ENCODE measurements at regions of chr16 and their contacts with region 1.

Region 1: DNA sequence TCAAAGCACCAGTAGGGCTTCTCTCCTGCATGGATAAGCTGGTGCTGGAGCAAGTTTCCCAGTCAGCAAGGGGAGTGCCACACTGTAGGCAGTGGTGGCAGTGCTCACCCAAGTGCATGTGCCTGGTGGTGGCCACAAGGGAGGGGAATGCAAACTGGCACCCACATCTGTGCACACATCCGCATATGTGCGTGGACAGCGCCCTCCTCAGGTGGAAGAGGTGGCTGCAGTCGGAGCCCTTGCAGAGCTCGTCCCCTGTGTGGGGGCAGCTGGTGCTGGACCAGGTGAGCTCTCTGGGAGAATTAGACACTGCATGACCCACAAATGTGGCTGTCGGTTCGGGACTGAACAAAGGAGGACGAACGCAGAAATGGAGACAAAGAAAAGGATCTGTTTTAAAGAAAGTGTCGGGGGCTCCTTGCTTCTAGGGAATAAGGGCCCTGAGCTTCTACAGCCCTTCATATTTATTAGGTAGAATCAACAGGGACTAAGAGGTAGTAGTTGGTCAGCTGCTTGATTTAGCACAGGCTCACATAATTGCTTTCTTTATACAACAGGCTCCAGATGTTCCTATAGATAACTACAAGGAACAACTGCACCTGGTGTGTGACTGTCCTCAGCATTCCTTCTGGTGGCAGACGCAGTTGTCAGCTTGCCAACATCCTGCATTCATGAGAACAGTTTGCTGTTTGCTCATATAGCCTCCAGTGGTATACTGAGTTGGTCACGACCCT is 5.3 kb upstream of the ZNF689 start:
- H3K4me3 ChIP-seq: no peak overlapping the region
- H3K27ac ChIP-seq: no peak overlapping the region
- H3K4me1 ChIP-seq: no peaks in the 10 kb centered on the region
- CTCF ChIP-seq: peak; percentile 95

Region 2: GRCh38 chr16:30458561-30459394 is 156.7 kb before region 1 on chr16:
- CTCF ChIA-PET with region 1: interaction called, 15 read pairs
- POLR2A ChIA-PET with region 1: no interaction called
- H3K4me3 ChIP-seq: no peak overlapping the region
- H3K27ac ChIP-seq: no peak overlapping the region
- H3K4me1 ChIP-seq: no peaks in the 10 kb centered on the region
- CTCF ChIP-seq: no peak

Region 3: DNA sequence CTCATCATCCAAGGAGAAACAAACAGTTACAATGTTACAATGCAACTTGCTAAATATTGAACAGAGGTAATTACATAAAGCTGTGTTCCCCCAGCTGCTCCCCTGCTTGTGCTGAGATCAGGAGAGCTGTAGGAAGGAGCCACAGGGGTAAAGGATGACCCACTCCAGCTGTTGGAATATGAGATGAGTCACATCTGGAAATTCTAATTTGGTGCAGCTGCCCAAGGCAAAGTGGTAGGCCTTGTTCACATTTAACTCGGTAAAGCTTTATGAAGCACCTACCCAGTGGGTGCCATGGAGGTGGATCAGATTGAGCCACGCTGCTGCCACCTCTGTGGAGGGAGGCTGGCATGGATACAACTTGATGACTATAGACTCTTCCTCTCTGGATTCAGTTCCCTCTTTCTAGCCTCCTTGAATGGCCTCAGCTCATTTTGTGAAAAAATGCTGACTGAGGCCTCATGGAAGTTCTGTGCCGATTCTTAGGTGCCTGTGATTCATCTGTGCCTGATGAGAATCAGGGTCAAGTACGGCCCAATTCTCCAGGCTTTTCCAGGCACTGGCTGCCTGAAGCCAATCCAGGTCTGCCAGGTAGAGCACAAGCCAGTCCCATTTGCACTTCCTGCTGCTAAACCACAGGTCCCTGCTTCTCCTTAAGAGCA is 12.8 kb before region 1 on chr16:
- CTCF ChIA-PET with region 1: interaction called, 21 read pairs
- POLR2A ChIA-PET with region 1: interaction called, 7 read pairs
- H3K4me3 ChIP-seq: no peak overlapping the region
- H3K27ac ChIP-seq: no peak overlapping the region
- H3K4me1 ChIP-seq: no peaks in the 10 kb centered on the region
- CTCF ChIP-seq: no peak

Region 4: GRCh38 chr16:30628627-30629540 is 13.4 kb after region 1 on chr16:
- CTCF ChIA-PET with region 1: interaction called, 79 read pairs
- POLR2A ChIA-PET with region 1: interaction called, 7 read pairs
- H3K4me3 ChIP-seq: no peak overlapping the region
- H3K27ac ChIP-seq: no peak overlapping the region
- H3K4me1 ChIP-seq: no peaks in the 10 kb centered on the region
- CTCF ChIP-seq: peak; percentile 83